ENCODE measurements at regions of chr5 and their contacts with region 1.

Region 1: GRCh38 chr5:66518716-66519171 is 77.4 kb upstream of the MAST4 start:
- DNase-seq: no peak

Region 2: DNA sequence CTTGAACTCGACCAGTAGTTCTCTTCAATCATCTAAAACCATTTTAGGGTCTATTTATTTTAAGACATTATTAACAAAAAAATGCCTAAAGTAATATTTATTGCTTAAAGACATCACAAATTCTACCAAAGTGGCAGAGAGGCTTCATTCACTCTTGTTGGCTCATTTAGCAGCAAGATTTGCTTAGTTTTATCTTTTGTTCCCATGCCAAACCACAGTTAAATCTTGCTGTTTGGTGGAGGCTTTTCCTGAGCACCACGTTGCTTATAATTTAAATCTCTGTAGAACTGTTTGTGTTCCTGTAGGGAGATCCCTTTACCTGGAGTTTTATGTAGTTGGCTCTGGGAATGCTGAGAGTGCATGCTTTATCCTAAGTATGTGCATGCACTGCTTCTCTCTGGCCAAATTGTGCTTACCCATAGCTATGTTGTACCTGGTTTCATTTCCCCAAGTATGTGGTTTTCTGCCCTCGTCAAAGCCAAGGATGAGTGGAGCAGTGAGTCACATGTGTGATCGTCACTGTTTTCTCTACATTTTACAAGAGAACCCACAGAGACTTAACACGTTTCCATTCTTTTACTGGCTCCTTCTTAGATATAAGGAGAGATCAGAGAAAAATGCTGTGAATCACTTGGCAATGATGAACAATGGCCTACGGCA is 35.3 kb after region 1 on chr5:
- intact Hi-C with region 1: loop called (anchors 2 kb)
- DNase-seq: no peak